Heart right ventricle (tissue), 16 donors: ENCODE measurements at regions of chr10 and their contacts with region 1.

Region 1: DNA sequence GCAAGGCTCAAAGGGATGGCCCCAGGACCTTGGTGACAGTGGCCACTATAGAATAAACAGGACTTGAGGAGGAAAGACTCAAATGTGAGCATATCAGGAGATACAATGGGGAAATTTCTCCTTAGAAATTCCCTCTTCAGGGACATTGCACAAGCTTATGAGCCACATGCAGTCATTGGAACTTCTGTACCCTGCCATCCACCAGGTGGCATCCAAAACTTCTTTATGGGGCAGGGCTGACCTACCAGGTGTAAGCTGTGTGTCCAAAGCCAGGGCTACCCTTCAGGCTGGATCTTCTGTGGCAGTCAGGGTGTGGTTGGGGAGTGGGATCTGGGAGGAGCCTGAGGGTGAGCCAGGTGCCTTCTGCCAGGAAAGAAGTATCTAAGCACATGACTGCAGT is 36.6 kb upstream of the LRRC18 start:
- DNase-seq: no peak
- ATAC-seq: peak; percentile 20 to 81 (median 63)
- H3K4me3 ChIP-seq: no peak overlapping the region
- H3K27ac ChIP-seq: no peak overlapping the region
- H3K4me1 ChIP-seq: peaks cover 0 to 2% (median 0%) of the 10 kb centered on the region in 9 donors
- H3K27me3 ChIP-seq: no peaks in the 10 kb centered on the region
- CTCF ChIP-seq: peak in 8 of 9 donors; percentile 15 to 53 (median 46)

Region 2: DNA sequence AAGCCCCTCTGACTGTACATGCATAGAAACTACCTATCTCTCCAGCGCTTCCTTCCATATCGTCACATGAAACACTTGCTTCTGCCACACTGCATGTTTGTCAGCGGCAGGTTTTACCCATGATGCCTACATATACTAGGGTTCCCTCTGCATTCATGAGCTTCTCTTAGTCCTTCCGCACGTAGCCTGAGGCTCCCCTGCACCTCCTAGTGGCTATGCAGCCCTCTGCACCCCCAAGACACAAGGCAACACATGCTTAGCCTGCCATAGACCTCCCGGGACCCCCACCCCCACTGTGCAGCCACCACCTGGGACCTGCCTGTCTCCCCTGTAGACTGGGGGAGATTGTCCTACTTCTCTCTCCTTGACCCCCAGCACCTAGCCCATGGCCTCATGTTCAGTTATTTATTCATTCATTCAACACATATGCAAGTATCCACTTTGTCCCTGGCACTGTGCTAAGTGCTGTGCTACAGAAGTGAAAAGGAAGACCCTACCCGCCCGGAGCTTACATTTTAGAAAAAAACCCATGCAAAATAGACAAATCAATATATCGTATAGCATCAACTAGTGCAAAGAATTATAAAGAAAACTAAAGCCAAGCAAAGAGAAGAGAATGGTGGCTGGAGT is 188.5 kb after region 1 on chr10:
- intact Hi-C with region 1: loop called (anchors 1 to 5 kb)
- DNase-seq: peak in 1 of 2 donors; percentile 34
- ATAC-seq: peak in 6 of 8 donors; percentile 27 to 73 (median 62)
- H3K4me3 ChIP-seq: no peak overlapping the region
- H3K27ac ChIP-seq: no peak overlapping the region
- H3K4me1 ChIP-seq: peaks cover 0 to 40% (median 13%) of the 10 kb centered on the region in 9 donors
- H3K27me3 ChIP-seq: no peaks in the 10 kb centered on the region
- CTCF ChIP-seq: peak; percentile 33 to 76 (median 66)

Region 3: GRCh38 chr10:49512121-49512809 is 536.1 kb after region 1 on chr10:
- intact Hi-C with region 1: loop called in 9 of 10 experiments (anchors 2 to 10 kb)
- DNase-seq: no peak
- ATAC-seq: peak in 1 of 8 donors; percentile 44
- H3K4me3 ChIP-seq: no peak overlapping the region
- H3K27ac ChIP-seq: no peak overlapping the region
- H3K4me1 ChIP-seq: peaks cover 0 to 18% (median 7%) of the 10 kb centered on the region in 9 donors
- H3K27me3 ChIP-seq: no peaks in the 10 kb centered on the region
- CTCF ChIP-seq: peak; percentile 10 to 74 (median 64)

Region 4: GRCh38 chr10:49518982-49519578 is 542.9 kb after region 1 on chr10:
- intact Hi-C with region 1: loop called in 8 of 10 experiments (anchors 5 to 10 kb)
- DNase-seq: peak in 1 of 2 donors; percentile 19
- ATAC-seq: peak in 7 of 8 donors; percentile 46 to 82 (median 66)
- H3K4me3 ChIP-seq: no peak overlapping the region
- H3K27ac ChIP-seq: no peak overlapping the region
- H3K4me1 ChIP-seq: peaks cover 0 to 30% (median 18%) of the 10 kb centered on the region in 9 donors
- H3K27me3 ChIP-seq: no peaks in the 10 kb centered on the region
- CTCF ChIP-seq: peak; percentile 51 to 75 (median 65)